CD14-positive monocyte (primary cell): ENCODE measurements at regions of chr19 and their contacts with region 1.

Region 1: DNA sequence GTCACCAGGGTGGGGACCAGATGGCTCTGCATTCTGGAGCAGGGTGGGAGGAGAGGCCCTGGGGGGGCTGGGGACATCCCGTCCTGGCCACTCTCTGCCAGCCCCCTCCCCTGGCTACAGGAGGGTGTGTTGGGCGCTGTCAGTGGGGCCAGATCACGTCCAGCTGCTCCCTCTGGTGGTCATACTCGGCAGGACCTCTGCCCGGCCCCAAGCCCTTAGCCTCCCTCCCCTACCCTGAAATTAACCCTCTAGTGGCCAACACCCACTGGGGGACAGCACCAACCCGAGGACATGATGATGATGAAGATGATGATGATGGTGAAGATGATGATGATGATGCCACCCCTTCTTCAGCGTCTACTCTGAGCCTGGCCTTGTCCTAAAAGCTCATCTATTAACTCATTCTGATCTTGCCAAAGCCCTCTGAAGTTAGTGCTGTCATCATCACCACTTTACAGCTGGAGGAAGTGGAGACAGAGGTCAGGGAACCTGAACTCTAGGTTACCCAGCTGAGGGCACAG is 590 bp upstream of the LGI4 start:
- DNase-seq: peak; percentile 62 to 72 (median 66)
- H3K4me3 ChIP-seq: no peak overlapping the region
- H3K4me3 Mint-ChIP-seq: no peak overlapping the region
- H3K27ac ChIP-seq: no peak overlapping the region
- H3K27ac Mint-ChIP-seq: no peak overlapping the region
- H3K4me1 ChIP-seq: peaks cover 26% of the 10 kb centered on the region in 2 donors
- H3K4me1 Mint-ChIP-seq: peaks cover 25% of the 10 kb centered on the region
- H3K27me3 ChIP-seq: no peaks in the 10 kb centered on the region
- H3K27me3 Mint-ChIP-seq: peaks cover 1 to 9% (median 2%) of the 10 kb centered on the region in 3 donors
- CTCF ChIP-seq: peak; percentile 94

Region 2: GRCh38 chr19:34436716-34437115 is 698.7 kb before region 1 on chr19:
- intact Hi-C with region 1: no loop called
- DNase-seq: no peak
- H3K4me3 ChIP-seq: no peak overlapping the region
- H3K4me3 Mint-ChIP-seq: no peak overlapping the region
- H3K27ac ChIP-seq: no peak overlapping the region
- H3K27ac Mint-ChIP-seq: no peak overlapping the region
- H3K4me1 ChIP-seq: no peaks in the 10 kb centered on the region
- H3K4me1 Mint-ChIP-seq: no peaks in the 10 kb centered on the region
- H3K27me3 ChIP-seq: no peaks in the 10 kb centered on the region
- H3K27me3 Mint-ChIP-seq: peaks cover 0 to 2% (median 2%) of the 10 kb centered on the region in 3 donors
- CTCF ChIP-seq: no peak

Region 3: GRCh38 chr19:34974646-34975045 is 160.8 kb before region 1 on chr19:
- intact Hi-C with region 1: loop called in 1 of 2 experiments (anchors 10 kb)
- DNase-seq: peak; percentile 11 to 91 (median 83)
- H3K4me3 ChIP-seq: peak overlapping the region in 1 of 3 experiments; percentile 57
- H3K4me3 Mint-ChIP-seq: peak overlapping the region in 1 of 2 donors; percentile 62
- H3K27ac ChIP-seq: peak overlapping the region in 1 of 2 donors; percentile 59
- H3K27ac Mint-ChIP-seq: peak overlapping the region; percentile 80 to 97 (median 94)
- H3K4me1 ChIP-seq: peaks cover 34 to 39% of the 10 kb centered on the region in 2 donors
- H3K4me1 Mint-ChIP-seq: peaks cover 40% of the 10 kb centered on the region
- H3K27me3 ChIP-seq: no peaks in the 10 kb centered on the region
- H3K27me3 Mint-ChIP-seq: peaks cover 2 to 3% (median 2%) of the 10 kb centered on the region in 3 donors
- CTCF ChIP-seq: no peak

Region 4: GRCh38 chr19:35066691-35067563 is 68.5 kb before region 1 on chr19:
- intact Hi-C with region 1: loop called in 1 of 2 experiments (anchors 5 kb)
- DNase-seq: peak; percentile 64 to 77 (median 70)
- H3K4me3 ChIP-seq: no peak overlapping the region
- H3K4me3 Mint-ChIP-seq: no peak overlapping the region
- H3K27ac ChIP-seq: no peak overlapping the region
- H3K27ac Mint-ChIP-seq: peak overlapping the region in 1 of 7 donors; percentile 57
- H3K4me1 ChIP-seq: no peaks in the 10 kb centered on the region
- H3K4me1 Mint-ChIP-seq: peaks cover 7% of the 10 kb centered on the region
- H3K27me3 ChIP-seq: no peaks in the 10 kb centered on the region
- H3K27me3 Mint-ChIP-seq: peaks cover 2 to 10% (median 4%) of the 10 kb centered on the region in 3 donors
- CTCF ChIP-seq: peak; percentile 85

Region 5: DNA sequence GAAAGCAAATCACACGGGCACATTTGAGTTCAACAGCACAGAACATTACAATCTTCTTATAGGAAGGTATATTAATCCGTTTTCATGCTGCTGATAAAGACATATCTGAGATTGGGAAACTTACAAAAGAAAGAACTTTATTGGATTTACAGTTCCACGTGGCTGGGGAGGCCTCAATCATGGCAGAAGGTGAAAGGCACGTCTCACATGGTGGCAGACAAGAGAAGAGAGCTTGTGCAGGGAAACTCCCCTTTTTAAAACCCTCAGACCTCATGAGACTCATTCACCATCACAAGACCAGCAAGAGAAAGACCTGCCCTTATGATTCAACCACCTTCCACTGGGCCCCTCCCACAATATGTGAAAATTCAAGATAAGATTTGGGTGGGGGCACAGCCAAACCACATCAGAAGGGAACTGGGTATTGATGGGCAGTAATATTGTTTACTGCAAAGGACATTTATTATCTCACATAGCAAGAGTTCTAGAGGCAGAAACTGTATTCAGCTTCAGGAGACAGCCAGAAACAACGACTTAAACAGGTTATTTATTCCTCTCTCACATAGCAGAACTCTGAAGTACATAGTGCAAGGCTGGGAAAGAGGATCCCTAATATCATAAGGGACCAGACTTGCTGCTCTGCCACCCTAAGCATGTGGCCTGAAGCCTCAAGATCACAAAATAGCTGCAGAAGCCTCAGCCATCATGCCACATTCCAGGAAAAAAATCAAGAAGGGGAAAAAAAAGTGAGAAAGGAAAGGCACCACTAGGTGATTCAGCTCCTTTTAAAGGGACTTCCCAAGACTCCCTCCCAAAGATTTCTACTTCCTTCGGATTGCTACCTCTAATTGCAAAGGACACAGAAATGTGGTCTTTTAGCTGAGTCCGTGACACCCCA is 42.2 kb after region 1 on chr19:
- intact Hi-C with region 1: no loop called
- DNase-seq: peak in 1 of 3 donors; percentile 59
- H3K4me3 ChIP-seq: no peak overlapping the region
- H3K4me3 Mint-ChIP-seq: no peak overlapping the region
- H3K27ac ChIP-seq: no peak overlapping the region
- H3K27ac Mint-ChIP-seq: peak overlapping the region in 5 of 7 donors; percentile 4 to 73 (median 52)
- H3K4me1 ChIP-seq: peaks cover 16 to 17% of the 10 kb centered on the region in 2 donors
- H3K4me1 Mint-ChIP-seq: peaks cover 38% of the 10 kb centered on the region
- H3K27me3 ChIP-seq: no peaks in the 10 kb centered on the region
- H3K27me3 Mint-ChIP-seq: peaks cover 0 to 2% (median 1%) of the 10 kb centered on the region in 3 donors
- CTCF ChIP-seq: no peak